MCF 10A (cell line): ENCODE measurements at regions of chr20 and their contacts with region 1.

Region 1: GRCh38 chr20:10090588-10091166 is 55.9 kb downstream of the ANKEF1 start:
- DNase-seq: peak; percentile 69
- H3K4me3 Mint-ChIP-seq: no peak overlapping the region
- H3K27ac Mint-ChIP-seq: no peak overlapping the region
- H3K4me1 Mint-ChIP-seq: peaks cover 11% of the 10 kb centered on the region
- H3K27me3 Mint-ChIP-seq: no peaks in the 10 kb centered on the region
- CTCF ChIP-seq: peak; percentile 57

Region 2: GRCh38 chr20:9955646-9956045 is 135.0 kb before region 1 on chr20:
- CTCF ChIA-PET with region 1: interaction called, 11 read pairs
- POLR2A ChIA-PET with region 1: no interaction called
- intact Hi-C with region 1: no loop called
- DNase-seq: peak; percentile 62
- H3K4me3 Mint-ChIP-seq: no peak overlapping the region
- H3K27ac Mint-ChIP-seq: no peak overlapping the region
- H3K4me1 Mint-ChIP-seq: peaks cover 13% of the 10 kb centered on the region
- H3K27me3 Mint-ChIP-seq: no peaks in the 10 kb centered on the region
- CTCF ChIP-seq: no peak

Region 3: GRCh38 chr20:10004900-10005299 is 85.8 kb before region 1 on chr20:
- CTCF ChIA-PET with region 1: interaction called, 16 read pairs
- POLR2A ChIA-PET with region 1: interaction called, 4 read pairs
- intact Hi-C with region 1: no loop called
- DNase-seq: no peak
- H3K4me3 Mint-ChIP-seq: no peak overlapping the region
- H3K27ac Mint-ChIP-seq: no peak overlapping the region
- H3K4me1 Mint-ChIP-seq: no peaks in the 10 kb centered on the region
- H3K27me3 Mint-ChIP-seq: no peaks in the 10 kb centered on the region
- CTCF ChIP-seq: no peak

Region 4: GRCh38 chr20:10079964-10080363 is 10.7 kb before region 1 on chr20:
- CTCF ChIA-PET with region 1: interaction called, 95 read pairs
- POLR2A ChIA-PET with region 1: interaction called, 12 read pairs
- intact Hi-C with region 1: no loop called
- DNase-seq: peak; percentile 91
- H3K4me3 Mint-ChIP-seq: no peak overlapping the region
- H3K27ac Mint-ChIP-seq: no peak overlapping the region
- H3K4me1 Mint-ChIP-seq: peaks cover 41% of the 10 kb centered on the region
- H3K27me3 Mint-ChIP-seq: no peaks in the 10 kb centered on the region
- CTCF ChIP-seq: no peak

Region 5: GRCh38 chr20:10142625-10143024 is 51.9 kb after region 1 on chr20:
- CTCF ChIA-PET with region 1: no interaction called
- POLR2A ChIA-PET with region 1: no interaction called
- intact Hi-C with region 1: no loop called
- DNase-seq: no peak
- H3K4me3 Mint-ChIP-seq: no peak overlapping the region
- H3K27ac Mint-ChIP-seq: no peak overlapping the region
- H3K4me1 Mint-ChIP-seq: no peaks in the 10 kb centered on the region
- H3K27me3 Mint-ChIP-seq: peaks cover 34% of the 10 kb centered on the region
- CTCF ChIP-seq: no peak

Region 6: GRCh38 chr20:10402938-10403608 is 312.4 kb after region 1 on chr20:
- CTCF ChIA-PET with region 1: interaction called, 14 read pairs
- POLR2A ChIA-PET with region 1: no interaction called
- intact Hi-C with region 1: no loop called
- DNase-seq: no peak
- H3K4me3 Mint-ChIP-seq: no peak overlapping the region
- H3K27ac Mint-ChIP-seq: no peak overlapping the region
- H3K4me1 Mint-ChIP-seq: no peaks in the 10 kb centered on the region
- H3K27me3 Mint-ChIP-seq: no peaks in the 10 kb centered on the region
- CTCF ChIP-seq: no peak

Region 7: GRCh38 chr20:10536531-10536930 is 445.9 kb after region 1 on chr20:
- CTCF ChIA-PET with region 1: interaction called, 6 read pairs
- POLR2A ChIA-PET with region 1: no interaction called
- intact Hi-C with region 1: loop called (anchors 5 kb)
- DNase-seq: peak; percentile 71
- H3K4me3 Mint-ChIP-seq: no peak overlapping the region
- H3K27ac Mint-ChIP-seq: no peak overlapping the region
- H3K4me1 Mint-ChIP-seq: peaks cover 31% of the 10 kb centered on the region
- H3K27me3 Mint-ChIP-seq: no peaks in the 10 kb centered on the region
- CTCF ChIP-seq: peak; percentile 44